CD8-positive, alpha-beta T cell (primary cell): ENCODE measurements at regions of chr17 and their contacts with region 1.

Region 1: GRCh38 chr17:50161023-50161910 is 4.5 kb upstream of the SGCA start:
- DNase-seq: peak; percentile 89 to 97 (median 93)
- ATAC-seq: peak; percentile 90
- H3K4me3 ChIP-seq: peak overlapping the region; percentile 49 to 58
- H3K4me3 Mint-ChIP-seq: peak overlapping the region; percentile 69
- H3K27ac ChIP-seq: peak overlapping the region; percentile 43 to 63
- H3K27ac Mint-ChIP-seq: peak overlapping the region; percentile 88
- H3K4me1 ChIP-seq: peaks cover 32% of the 10 kb centered on the region
- H3K4me1 Mint-ChIP-seq: peaks cover 45% of the 10 kb centered on the region
- H3K27me3 ChIP-seq: no peaks in the 10 kb centered on the region
- H3K27me3 Mint-ChIP-seq: no peaks in the 10 kb centered on the region
- CTCF ChIP-seq: peak; percentile 83

Region 2: DNA sequence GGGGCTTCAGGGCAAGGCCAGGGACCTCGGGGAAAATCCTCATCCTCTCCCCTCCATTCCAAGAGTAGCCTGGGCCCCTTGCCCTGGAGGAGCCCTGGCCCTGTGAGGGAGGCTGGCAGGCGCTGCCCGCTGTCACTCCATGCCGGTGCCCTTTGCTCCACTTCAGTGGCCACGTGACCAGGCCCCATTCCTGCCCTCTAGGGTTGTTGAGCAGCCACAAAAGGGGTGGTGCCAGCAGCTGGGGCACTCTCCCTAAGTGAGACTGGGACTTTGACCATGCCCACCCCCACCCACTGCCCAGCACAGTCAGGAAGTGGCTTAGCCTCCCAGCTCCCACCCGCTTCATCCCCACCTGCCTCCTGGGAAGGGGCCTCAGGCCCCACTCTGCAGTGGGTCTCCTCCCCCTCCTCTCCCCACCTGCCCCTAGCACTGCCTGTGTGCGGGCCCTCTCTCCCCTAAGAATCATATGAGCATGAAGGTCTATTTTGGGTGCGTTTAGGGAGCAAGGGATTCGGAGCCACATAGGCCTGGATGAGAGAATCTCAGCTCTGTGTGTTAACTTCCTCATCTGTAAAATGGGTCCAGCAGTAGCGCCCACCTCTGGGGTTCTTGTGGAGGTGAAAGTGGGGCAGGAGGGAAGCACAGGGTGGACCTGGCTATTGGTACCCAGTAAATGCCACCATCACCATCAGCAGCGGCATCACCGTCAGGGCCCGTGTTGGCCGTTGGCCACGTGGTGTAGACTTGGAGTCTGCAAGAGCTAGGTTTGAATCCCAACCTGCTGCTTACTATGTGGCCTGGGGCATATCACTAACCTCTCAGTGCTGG is 58.9 kb before region 1 on chr17:
- CTCF ChIA-PET with region 1: interaction called, 12 read pairs
- POLR2A ChIA-PET with region 1: interaction called, 3 read pairs
- intact Hi-C with region 1: no loop called
- DNase-seq: no peak
- ATAC-seq: no peak
- H3K4me3 ChIP-seq: no peak overlapping the region
- H3K4me3 Mint-ChIP-seq: no peak overlapping the region
- H3K27ac ChIP-seq: no peak overlapping the region
- H3K27ac Mint-ChIP-seq: no peak overlapping the region
- H3K4me1 ChIP-seq: no peaks in the 10 kb centered on the region
- H3K4me1 Mint-ChIP-seq: peaks cover 15% of the 10 kb centered on the region
- H3K27me3 ChIP-seq: no peaks in the 10 kb centered on the region
- H3K27me3 Mint-ChIP-seq: no peaks in the 10 kb centered on the region
- CTCF ChIP-seq: no peak

Region 3: DNA sequence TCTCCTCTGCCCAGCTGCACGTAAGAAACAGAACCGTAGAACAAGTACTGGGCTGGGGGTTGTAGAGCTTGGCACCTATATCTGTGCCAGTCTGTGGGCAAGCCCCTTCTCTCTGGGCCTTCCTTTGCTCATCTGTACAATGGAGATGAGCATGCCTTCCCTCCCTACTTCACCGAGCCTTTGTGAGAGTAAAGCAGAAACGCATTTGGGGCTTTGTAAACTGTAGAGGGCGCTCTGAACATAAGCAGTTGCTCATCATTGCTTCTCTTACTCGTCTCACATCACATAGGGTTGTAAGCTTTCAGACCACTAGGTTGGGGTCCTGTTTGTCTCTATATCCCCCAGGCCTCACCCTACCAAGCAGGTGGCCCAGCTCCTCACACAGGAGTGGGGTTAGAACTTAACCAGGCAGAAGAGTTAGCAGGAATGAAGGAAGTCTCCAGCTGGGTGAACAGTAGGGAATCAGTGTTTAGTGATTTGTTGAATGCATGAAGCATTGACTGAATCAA is 46.4 kb before region 1 on chr17:
- CTCF ChIA-PET with region 1: interaction called, 23 read pairs
- POLR2A ChIA-PET with region 1: interaction called, 3 read pairs
- intact Hi-C with region 1: loop called (anchors 1 kb)
- DNase-seq: peak in 5 of 9 experiments; percentile 30 to 69 (median 45)
- ATAC-seq: peak; percentile 56
- H3K4me3 ChIP-seq: no peak overlapping the region
- H3K4me3 Mint-ChIP-seq: no peak overlapping the region
- H3K27ac ChIP-seq: no peak overlapping the region
- H3K27ac Mint-ChIP-seq: no peak overlapping the region
- H3K4me1 ChIP-seq: peaks cover 14% of the 10 kb centered on the region
- H3K4me1 Mint-ChIP-seq: peaks cover 13% of the 10 kb centered on the region
- H3K27me3 ChIP-seq: peaks cover 11 to 17% of the 10 kb centered on the region in 2 experiments
- H3K27me3 Mint-ChIP-seq: peaks cover 36% of the 10 kb centered on the region
- CTCF ChIP-seq: peak; percentile 56

Region 4: GRCh38 chr17:50129728-50130558 is 31.3 kb before region 1 on chr17 and contains the start of gene SAMD14:
- CTCF ChIA-PET with region 1: interaction called, 16 read pairs
- POLR2A ChIA-PET with region 1: interaction called, 5 read pairs
- intact Hi-C with region 1: no loop called
- DNase-seq: peak in 5 of 9 experiments; percentile 48 to 78 (median 72)
- ATAC-seq: peak; percentile 69
- H3K4me3 ChIP-seq: peak within 1 kb of the TSS; percentile 45 to 50
- H3K4me3 Mint-ChIP-seq: peak within 1 kb of the TSS; percentile 83
- H3K27ac ChIP-seq: no peak within 1 kb of the TSS
- H3K27ac Mint-ChIP-seq: peak within 1 kb of the TSS; percentile 81
- H3K4me1 ChIP-seq: peaks cover 26% of the 10 kb centered on the region
- H3K4me1 Mint-ChIP-seq: peaks cover 27% of the 10 kb centered on the region
- H3K27me3 ChIP-seq: peaks cover 6 to 18% of the 10 kb centered on the region in 2 experiments
- H3K27me3 Mint-ChIP-seq: peaks cover 23% of the 10 kb centered on the region
- CTCF ChIP-seq: no peak
- total RNA-seq, gene SAMD14: 0.31 to 0.62 TPM

Region 5: GRCh38 chr17:50177983-50178834 is 16.9 kb after region 1 on chr17:
- CTCF ChIA-PET with region 1: interaction called, 13 read pairs
- POLR2A ChIA-PET with region 1: no interaction called
- intact Hi-C with region 1: no loop called
- DNase-seq: peak in 7 of 9 experiments; percentile 22 to 66 (median 57)
- ATAC-seq: peak; percentile 89
- H3K4me3 ChIP-seq: no peak overlapping the region
- H3K4me3 Mint-ChIP-seq: peak overlapping the region; percentile 26
- H3K27ac ChIP-seq: no peak overlapping the region
- H3K27ac Mint-ChIP-seq: no peak overlapping the region
- H3K4me1 ChIP-seq: peaks cover 4% of the 10 kb centered on the region
- H3K4me1 Mint-ChIP-seq: peaks cover 3% of the 10 kb centered on the region
- H3K27me3 ChIP-seq: no peaks in the 10 kb centered on the region
- H3K27me3 Mint-ChIP-seq: peaks cover 2% of the 10 kb centered on the region
- CTCF ChIP-seq: no peak

Region 6: GRCh38 chr17:50200457-50201275 is 39.4 kb after region 1 on chr17:
- CTCF ChIA-PET with region 1: interaction called, 4 read pairs
- POLR2A ChIA-PET with region 1: no interaction called
- intact Hi-C with region 1: loop called in 1 of 2 experiments (anchors 1 kb)
- DNase-seq: peak; percentile 66 to 87 (median 80)
- ATAC-seq: peak; percentile 49
- H3K4me3 ChIP-seq: peak overlapping the region; percentile 47 to 49
- H3K4me3 Mint-ChIP-seq: peak overlapping the region; percentile 78
- H3K27ac ChIP-seq: no peak overlapping the region
- H3K27ac Mint-ChIP-seq: peak overlapping the region; percentile 11
- H3K4me1 ChIP-seq: peaks cover 21% of the 10 kb centered on the region
- H3K4me1 Mint-ChIP-seq: peaks cover 25% of the 10 kb centered on the region
- H3K27me3 ChIP-seq: peaks cover 12 to 20% of the 10 kb centered on the region in 2 experiments
- H3K27me3 Mint-ChIP-seq: peaks cover 42% of the 10 kb centered on the region
- CTCF ChIP-seq: peak; percentile 100